Calu3 (cell line): ENCODE measurements at regions of chr1 and their contacts with region 1.

Region 1: GRCh38 chr1:234997201-234997895 is 131.3 kb downstream of the TOMM20 start:
- DNase-seq: peak; percentile 99
- H3K4me3 Mint-ChIP-seq: peak overlapping the region; percentile 22
- H3K27ac Mint-ChIP-seq: peak overlapping the region; percentile 91
- H3K4me1 Mint-ChIP-seq: peaks cover 28% of the 10 kb centered on the region
- H3K27me3 Mint-ChIP-seq: no peaks in the 10 kb centered on the region
- CTCF ChIP-seq: no peak

Region 2: DNA sequence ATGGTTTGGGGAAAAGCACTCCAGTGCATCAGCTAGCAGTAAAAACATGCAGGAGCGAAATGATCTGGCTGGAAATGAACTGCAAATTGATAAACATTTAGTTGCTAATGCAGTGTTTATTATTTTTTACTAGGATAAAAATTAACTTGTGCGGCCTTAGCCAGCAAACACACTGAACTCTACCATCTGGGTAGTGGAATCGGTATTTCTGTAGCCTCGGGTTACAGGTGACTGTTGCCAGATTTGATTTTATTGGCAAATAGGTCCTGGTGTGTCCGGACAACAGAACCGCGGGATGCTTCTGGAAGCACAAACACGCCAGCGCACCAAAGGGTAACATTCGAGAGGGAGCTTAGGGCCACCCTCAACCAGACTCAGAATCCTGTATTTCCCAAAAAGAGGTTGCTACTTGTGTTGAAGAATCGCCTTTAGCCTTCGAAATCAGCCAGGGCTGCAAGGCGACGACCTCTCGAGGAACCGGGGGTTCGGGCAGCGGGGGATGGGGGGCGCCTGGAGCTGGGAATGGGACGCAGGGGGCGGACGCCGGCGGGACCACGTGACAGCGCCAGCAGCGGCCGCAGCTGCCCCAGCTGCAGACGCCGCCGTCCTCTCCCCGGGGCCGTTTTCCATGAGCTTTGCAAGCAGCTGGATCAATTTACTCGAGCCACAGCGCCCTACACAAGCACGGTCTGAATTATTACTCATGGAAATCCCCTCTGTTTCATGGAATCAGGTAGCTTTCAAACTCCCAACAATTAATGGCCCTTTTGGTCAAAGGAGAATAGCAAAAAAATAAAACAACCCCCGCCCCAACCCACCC is 27.6 kb before region 1 on chr1:
- CTCF ChIA-PET with region 1: interaction called, 4 read pairs
- intact Hi-C with region 1: loop called (anchors 2 kb)
- DNase-seq: peak; percentile 58
- H3K4me3 Mint-ChIP-seq: peak overlapping the region; percentile 42
- H3K27ac Mint-ChIP-seq: no peak overlapping the region
- H3K4me1 Mint-ChIP-seq: peaks cover 46% of the 10 kb centered on the region
- H3K27me3 Mint-ChIP-seq: no peaks in the 10 kb centered on the region
- CTCF ChIP-seq: no peak

Region 3: GRCh38 chr1:234980645-234981396 is 16.5 kb before region 1 on chr1:
- CTCF ChIA-PET with region 1: no interaction called
- intact Hi-C with region 1: loop called (anchors 1 kb)
- DNase-seq: peak; percentile 78
- H3K4me3 Mint-ChIP-seq: peak overlapping the region; percentile 47
- H3K27ac Mint-ChIP-seq: peak overlapping the region; percentile 97
- H3K4me1 Mint-ChIP-seq: peaks cover 65% of the 10 kb centered on the region
- H3K27me3 Mint-ChIP-seq: no peaks in the 10 kb centered on the region
- CTCF ChIP-seq: no peak

Region 4: DNA sequence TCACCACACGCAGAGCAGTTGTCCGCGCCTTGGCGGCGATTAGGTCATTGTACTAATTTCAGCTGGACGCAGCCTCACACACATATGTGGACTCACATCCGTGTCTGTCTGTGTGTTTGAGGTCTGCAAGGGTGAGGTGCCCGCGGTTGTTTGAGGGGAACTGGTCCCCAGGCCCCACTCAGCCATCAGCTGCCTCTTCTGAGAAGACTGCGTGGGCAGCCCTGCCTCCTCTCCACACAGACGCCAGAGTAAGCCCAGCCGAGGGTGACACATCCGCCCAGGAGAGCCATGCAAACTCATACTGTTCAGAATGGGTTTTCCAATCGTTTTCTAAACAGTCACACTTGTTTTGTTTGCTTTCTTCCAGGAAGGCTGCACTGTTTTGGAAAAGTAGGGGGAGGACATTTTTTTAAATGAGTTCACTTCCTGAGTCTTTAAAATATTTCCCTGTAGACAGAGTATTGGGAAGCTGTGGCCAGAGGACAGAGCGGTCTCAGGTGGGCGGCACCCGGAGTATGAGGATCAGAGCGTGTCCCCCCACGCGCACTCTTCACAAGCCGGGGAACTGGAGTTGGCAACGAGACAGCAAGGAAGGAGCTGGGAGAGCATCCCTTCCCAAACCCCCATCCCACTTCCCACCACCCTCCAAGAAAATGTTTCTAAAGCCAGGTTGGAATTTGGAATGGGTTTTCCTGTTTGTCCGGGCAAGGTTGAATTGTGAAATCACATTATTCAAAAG is 78.0 kb after region 1 on chr1:
- CTCF ChIA-PET with region 1: interaction called, 5 read pairs
- intact Hi-C with region 1: loop called (anchors 1 kb)
- DNase-seq: peak; percentile 73
- H3K4me3 Mint-ChIP-seq: peak overlapping the region; percentile 50
- H3K27ac Mint-ChIP-seq: peak overlapping the region; percentile 98
- H3K4me1 Mint-ChIP-seq: peaks cover 35% of the 10 kb centered on the region
- H3K27me3 Mint-ChIP-seq: no peaks in the 10 kb centered on the region
- CTCF ChIP-seq: no peak